GM12878 (cell line): ENCODE measurements at regions of chr9 and their contacts with region 1.

Region 1: GRCh38 chr9:127955294-127956035 is 17.8 kb upstream of the DPM2 start:
- DNase-seq: no peak
- ATAC-seq: peak; percentile 99
- H3K4me3 ChIP-seq: no peak overlapping the region
- H3K27ac ChIP-seq: no peak overlapping the region
- H3K4me1 ChIP-seq: peaks cover 14% of the 10 kb centered on the region
- H3K27me3 ChIP-seq: no peaks in the 10 kb centered on the region
- CTCF ChIP-seq: peak; percentile 59 to 69 (median 69)
- EP300 ChIP-seq: no peak
- POLR2A ChIP-seq: no peak
- RAD21 ChIP-seq: peak; percentile 70

Region 2: GRCh38 chr9:127943731-127944144 is 11.7 kb before region 1 on chr9:
- CTCF ChIA-PET with region 1: interaction called, 60 read pairs
- POLR2A ChIA-PET with region 1: no interaction called
- RAD21 ChIA-PET with region 1: interaction called, 3 read pairs
- SMC1A ChIA-PET with region 1: interaction called, 3 read pairs
- in situ Hi-C with region 1: no loop called
- intact Hi-C with region 1: no loop called
- DNase-seq: no peak
- ATAC-seq: peak; percentile 96
- H3K4me3 ChIP-seq: no peak overlapping the region
- H3K27ac ChIP-seq: no peak overlapping the region
- H3K4me1 ChIP-seq: peaks cover 7% of the 10 kb centered on the region
- H3K27me3 ChIP-seq: no peaks in the 10 kb centered on the region
- CTCF ChIP-seq: peak; percentile 72 to 96 (median 92)
- EP300 ChIP-seq: no peak
- POLR2A ChIP-seq: no peak; the same call in none of the 2 replicates
- RAD21 ChIP-seq: peak; percentile 91

Region 3: GRCh38 chr9:127980706-127981558 is 25.5 kb after region 1 on chr9 and contains the start of gene EEIG1:
- CTCF ChIA-PET with region 1: interaction called, 34 read pairs
- POLR2A ChIA-PET with region 1: interaction called, 3 read pairs
- RAD21 ChIA-PET with region 1: interaction called, 14 read pairs
- SMC1A ChIA-PET with region 1: interaction called, 16 read pairs
- in situ Hi-C with region 1: no loop called
- intact Hi-C with region 1: no loop called
- DNase-seq: no peak
- ATAC-seq: peak; percentile 88
- H3K4me3 ChIP-seq: peak within 1 kb of the TSS; percentile 93
- H3K27ac ChIP-seq: peak within 1 kb of the TSS; percentile 76
- H3K4me1 ChIP-seq: peaks cover 53% of the 10 kb centered on the region
- H3K27me3 ChIP-seq: no peaks in the 10 kb centered on the region
- CTCF ChIP-seq: no peak
- EP300 ChIP-seq: no peak
- POLR2A ChIP-seq: peak; percentile 91
- RAD21 ChIP-seq: no peak
- polyA plus RNA-seq, gene EEIG1: 1.2 to 2.7 TPM

Region 4: DNA sequence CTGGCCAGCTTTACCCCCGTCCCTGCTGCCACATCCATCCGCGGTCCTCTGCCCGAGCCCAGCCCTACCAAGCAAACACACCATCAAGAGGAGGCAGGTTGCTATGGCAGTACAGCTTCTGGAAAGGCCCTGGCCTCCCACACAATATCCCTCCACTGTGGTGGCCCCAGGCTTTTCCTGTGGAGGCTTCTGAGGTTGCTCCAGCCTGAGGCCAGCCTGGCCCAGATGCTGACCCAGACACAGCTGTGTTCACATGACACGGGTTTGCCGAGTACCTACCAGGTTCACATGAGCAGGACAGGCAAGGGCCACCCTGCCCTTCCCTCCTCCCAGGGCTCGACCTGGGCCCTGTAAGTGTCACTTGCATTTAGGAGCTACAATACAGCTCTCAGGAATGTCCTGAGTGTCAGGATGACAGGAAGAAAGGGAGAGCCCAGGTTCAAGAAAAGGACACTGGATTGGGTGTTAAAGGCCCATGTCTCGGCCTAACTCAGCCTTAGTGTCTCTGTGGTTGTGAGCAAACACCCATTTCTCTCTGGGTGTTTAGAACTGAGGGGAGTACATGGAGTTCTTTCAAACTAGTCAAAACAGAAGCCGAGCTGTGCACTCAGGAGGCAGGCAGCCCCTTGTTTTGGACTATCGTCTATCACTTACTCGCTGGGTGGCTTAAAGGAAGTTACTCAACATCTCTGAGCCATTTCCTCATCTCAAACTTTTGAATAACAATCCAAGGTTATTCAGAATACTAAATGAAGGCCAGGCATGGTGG is 71.5 kb after region 1 on chr9:
- CTCF ChIA-PET with region 1: interaction called, 332 read pairs
- POLR2A ChIA-PET with region 1: interaction called, 3 read pairs
- RAD21 ChIA-PET with region 1: interaction called, 28 read pairs
- SMC1A ChIA-PET with region 1: interaction called, 96 read pairs
- in situ Hi-C with region 1: loop called (anchors 10 kb)
- intact Hi-C with region 1: no loop called
- DNase-seq: no peak
- ATAC-seq: peak; percentile 38
- H3K4me3 ChIP-seq: no peak overlapping the region
- H3K27ac ChIP-seq: peak overlapping the region; percentile 55
- H3K4me1 ChIP-seq: peaks cover 59% of the 10 kb centered on the region
- H3K27me3 ChIP-seq: no peaks in the 10 kb centered on the region
- CTCF ChIP-seq: no peak
- EP300 ChIP-seq: no peak
- POLR2A ChIP-seq: no peak
- RAD21 ChIP-seq: no peak

Region 5: DNA sequence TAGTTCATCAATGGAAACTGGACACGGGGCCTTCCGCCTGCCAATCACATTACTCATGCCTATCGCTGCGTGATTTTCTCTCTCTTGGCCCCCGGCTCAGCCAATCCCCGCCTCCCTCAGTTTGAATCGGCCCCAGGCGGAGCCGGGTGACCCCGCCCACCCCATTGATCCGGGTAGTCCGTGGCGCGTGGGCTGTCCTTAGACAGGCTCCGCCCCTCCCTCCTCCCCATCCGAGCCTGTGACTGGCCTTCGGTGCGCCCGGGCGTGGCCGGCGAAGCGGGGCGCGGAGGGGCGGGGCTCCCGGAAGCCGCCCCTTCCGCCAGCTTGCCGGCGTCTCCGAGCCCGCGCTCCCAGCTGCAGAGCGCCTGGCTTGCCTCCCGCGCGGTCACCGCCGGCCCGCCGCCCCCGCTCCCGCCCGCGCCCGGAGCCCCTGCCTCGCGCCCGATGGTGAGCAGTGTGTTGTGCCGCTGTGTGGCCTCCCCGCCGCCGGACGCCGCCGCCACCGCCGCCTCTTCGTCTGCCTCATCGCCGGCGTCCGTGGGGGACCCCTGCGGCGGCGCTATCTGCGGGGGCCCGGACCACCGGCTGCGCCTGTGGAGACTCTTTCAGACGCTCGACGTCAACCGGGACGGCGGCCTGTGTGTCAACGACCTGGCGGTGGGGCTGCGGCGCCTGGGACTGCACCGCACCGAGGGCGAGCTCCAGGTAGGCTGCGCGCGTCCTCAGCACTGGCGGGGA is 112.6 kb after region 1 on chr9 and contains the start of gene SLC25A25:
- CTCF ChIA-PET with region 1: interaction called, 4 read pairs
- POLR2A ChIA-PET with region 1: no interaction called
- RAD21 ChIA-PET with region 1: interaction called, 10 read pairs
- SMC1A ChIA-PET with region 1: interaction called, 11 read pairs
- in situ Hi-C with region 1: no loop called
- intact Hi-C with region 1: no loop called
- DNase-seq: peak; percentile 96
- ATAC-seq: peak; percentile 81
- H3K4me3 ChIP-seq: peak within 1 kb of the TSS; percentile 90
- H3K27ac ChIP-seq: peak within 1 kb of the TSS; percentile 99
- H3K4me1 ChIP-seq: peaks cover 30% of the 10 kb centered on the region
- H3K27me3 ChIP-seq: no peaks in the 10 kb centered on the region
- CTCF ChIP-seq: 0 out of 6 replicates have a peak, but pooled peaks of 1 of the 3 experiments have one; percentile 3
- EP300 ChIP-seq: no peak
- POLR2A ChIP-seq: peak; percentile 86
- RAD21 ChIP-seq: no peak
- polyA plus RNA-seq, gene SLC25A25: 0.04 TPM in 1 of 2 experiments, not detected in the other

Region 6: DNA sequence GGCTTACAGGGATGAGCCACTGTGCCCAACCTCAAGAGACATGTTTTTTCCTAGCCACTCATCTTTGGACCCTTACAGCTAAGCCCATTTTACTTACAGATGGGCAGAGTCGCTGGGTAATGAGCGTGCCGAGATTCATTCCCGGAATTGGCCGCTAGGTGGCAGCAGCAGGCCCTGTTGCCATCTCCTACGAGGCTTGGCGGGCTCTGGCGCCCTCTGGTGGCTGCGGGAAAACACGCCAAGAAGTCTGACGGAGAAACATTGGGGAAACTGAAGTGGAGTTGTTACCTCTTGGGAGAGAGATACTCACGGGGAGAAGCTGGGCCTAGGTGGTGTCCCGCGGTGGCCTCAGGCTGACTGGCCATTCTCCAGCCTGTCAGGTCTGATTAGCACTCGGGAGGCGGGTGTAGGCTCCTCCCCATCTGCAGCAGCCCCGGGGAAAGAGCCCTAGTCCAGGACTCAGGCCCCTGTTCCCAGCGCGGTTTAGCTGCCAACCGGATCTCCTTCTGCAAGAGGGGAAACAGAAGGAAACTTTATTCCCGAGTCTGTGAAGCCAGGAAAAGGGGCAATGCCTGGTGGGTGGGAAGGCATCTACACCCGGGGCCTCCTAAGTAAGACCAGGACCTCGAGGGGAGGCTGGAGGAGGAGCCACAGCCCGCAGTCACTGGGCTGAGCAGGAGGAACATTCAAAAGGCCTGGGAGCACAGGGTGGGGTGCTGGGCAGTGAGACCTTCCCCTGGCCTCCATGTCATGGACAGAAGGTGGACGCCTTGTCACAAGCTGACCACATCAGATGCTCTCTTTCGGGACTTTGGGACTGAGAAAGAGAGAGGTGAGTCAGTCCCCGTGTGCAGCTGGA is 162.4 kb after region 1 on chr9:
- CTCF ChIA-PET with region 1: interaction called, 21 read pairs
- POLR2A ChIA-PET with region 1: no interaction called
- RAD21 ChIA-PET with region 1: interaction called, 5 read pairs
- SMC1A ChIA-PET with region 1: interaction called, 10 read pairs
- in situ Hi-C with region 1: no loop called
- intact Hi-C with region 1: no loop called
- DNase-seq: no peak
- ATAC-seq: peak; percentile 79
- H3K4me3 ChIP-seq: no peak overlapping the region
- H3K27ac ChIP-seq: no peak overlapping the region
- H3K4me1 ChIP-seq: peaks cover 23% of the 10 kb centered on the region
- H3K27me3 ChIP-seq: no peaks in the 10 kb centered on the region
- CTCF ChIP-seq: peak; percentile 100; a peak in 5 of 6 replicates
- EP300 ChIP-seq: no peak
- POLR2A ChIP-seq: peak; percentile 65
- RAD21 ChIP-seq: peak; percentile 99